Heart right ventricle (tissue), 16 donors: ENCODE measurements at regions of chr1 and their contacts with region 1.

Region 1: DNA sequence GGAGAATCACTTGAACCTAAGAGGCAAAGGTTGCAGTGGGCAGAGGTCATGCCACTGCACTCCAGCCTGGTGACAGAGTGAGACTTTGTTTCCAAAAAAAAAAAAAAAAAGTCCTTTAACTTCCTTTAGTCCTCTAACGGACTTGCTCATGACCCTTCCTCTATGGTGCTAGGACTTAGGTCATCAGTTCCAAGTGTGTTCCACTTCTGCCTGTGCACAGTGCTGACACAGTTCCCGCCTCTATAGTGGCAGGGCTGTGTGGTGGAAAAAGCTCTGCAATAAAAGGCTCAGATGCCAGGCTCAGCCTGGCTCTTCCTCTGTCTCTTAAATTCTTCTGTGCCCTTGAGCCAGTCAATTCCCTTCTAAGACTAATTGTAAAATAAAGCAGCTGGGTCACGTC is 22.0 kb downstream of the CC2D1B start:
- DNase-seq: no peak
- ATAC-seq: no peak
- H3K4me3 ChIP-seq: no peak overlapping the region
- H3K27ac ChIP-seq: no peak overlapping the region
- H3K4me1 ChIP-seq: peaks cover 0 to 6% (median 0%) of the 10 kb centered on the region in 9 donors
- H3K27me3 ChIP-seq: no peaks in the 10 kb centered on the region
- CTCF ChIP-seq: no peak

Region 2: DNA sequence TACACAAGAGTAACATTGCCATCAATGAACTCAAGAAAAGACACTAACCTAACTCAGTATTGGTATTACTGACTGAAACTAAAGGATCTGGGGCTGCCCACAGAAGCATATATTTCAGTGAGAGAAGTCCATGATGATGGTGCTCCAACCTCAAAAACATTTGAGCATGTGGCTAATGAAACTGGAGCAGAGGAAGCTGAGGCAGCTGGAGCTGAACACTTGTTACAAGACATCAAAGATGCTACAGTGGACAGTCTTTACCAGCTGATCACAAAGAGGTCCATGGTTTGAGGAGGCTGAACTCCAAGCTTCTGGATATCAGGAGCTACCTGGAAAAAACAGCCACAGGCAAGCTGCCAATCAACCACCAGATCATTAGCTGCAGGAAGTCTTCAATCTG is 971.4 kb before region 1 on chr1:
- intact Hi-C with region 1: loop called in 1 of 10 experiments (anchors 5 kb)
- DNase-seq: no peak
- ATAC-seq: no peak
- H3K4me3 ChIP-seq: no peak overlapping the region
- H3K27ac ChIP-seq: no peak overlapping the region
- H3K4me1 ChIP-seq: no peaks in the 10 kb centered on the region
- H3K27me3 ChIP-seq: no peaks in the 10 kb centered on the region
- CTCF ChIP-seq: no peak